ENCODE measurements at regions of chr4 and their contacts with region 1.

Region 1: DNA sequence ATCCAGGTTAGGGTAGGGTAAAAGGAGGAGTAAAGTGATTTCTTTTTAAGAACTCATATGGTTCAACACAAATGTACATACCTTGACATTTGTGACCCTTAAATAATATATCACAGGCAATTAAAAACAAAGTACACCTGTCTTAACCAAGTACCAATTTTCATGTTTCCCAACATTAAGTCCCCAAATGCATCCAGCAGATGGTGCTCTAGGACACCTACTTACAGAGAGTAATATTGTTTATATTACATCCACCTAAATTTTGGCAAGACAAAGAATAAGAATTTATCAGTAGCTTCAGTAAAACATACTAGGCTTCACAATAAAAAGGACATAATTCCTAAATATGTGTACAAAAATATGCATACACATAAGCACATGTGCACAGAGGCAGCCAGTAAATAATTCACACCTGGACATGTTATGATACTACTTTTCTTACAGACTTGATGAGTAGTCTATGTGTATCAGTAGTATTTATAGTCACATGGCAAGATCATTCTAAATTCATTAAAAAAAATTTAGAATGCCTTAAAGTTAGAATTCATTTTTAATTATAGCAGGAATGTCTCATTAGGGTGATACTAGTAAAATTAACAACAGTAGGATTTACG is 219.7 kb downstream of the DCLK2 start:
- DNase-seq: no peak
- H3K4me3 Mint-ChIP-seq: no peak overlapping the region
- H3K27ac Mint-ChIP-seq: no peak overlapping the region
- H3K4me1 Mint-ChIP-seq: peaks cover 13% of the 10 kb centered on the region
- H3K27me3 Mint-ChIP-seq: no peaks in the 10 kb centered on the region

Region 2: DNA sequence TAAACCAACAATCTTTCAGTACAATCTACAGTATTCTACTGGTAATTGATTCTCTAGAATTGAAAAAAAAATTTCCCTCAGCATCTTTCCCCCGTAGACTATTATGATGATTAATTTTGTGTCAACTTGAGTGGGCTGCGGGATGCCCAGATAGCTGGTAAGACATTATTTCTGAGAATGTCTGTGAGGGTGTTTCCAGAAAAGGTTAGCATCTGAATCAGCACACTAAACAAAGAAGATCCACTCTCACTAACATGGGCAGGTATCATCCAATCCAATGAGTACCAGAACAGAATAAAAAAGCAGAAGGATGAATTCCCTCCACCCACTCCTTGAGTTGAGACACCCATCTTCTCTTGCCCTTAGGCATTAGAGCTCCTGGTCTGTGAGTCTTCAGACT is 97.9 kb after region 1 on chr4:
- intact Hi-C with region 1: loop called (anchors 2 kb)
- DNase-seq: no peak
- H3K4me3 Mint-ChIP-seq: no peak overlapping the region
- H3K27ac Mint-ChIP-seq: peak overlapping the region; percentile 84
- H3K4me1 Mint-ChIP-seq: peaks cover 17% of the 10 kb centered on the region
- H3K27me3 Mint-ChIP-seq: no peaks in the 10 kb centered on the region

Region 3: DNA sequence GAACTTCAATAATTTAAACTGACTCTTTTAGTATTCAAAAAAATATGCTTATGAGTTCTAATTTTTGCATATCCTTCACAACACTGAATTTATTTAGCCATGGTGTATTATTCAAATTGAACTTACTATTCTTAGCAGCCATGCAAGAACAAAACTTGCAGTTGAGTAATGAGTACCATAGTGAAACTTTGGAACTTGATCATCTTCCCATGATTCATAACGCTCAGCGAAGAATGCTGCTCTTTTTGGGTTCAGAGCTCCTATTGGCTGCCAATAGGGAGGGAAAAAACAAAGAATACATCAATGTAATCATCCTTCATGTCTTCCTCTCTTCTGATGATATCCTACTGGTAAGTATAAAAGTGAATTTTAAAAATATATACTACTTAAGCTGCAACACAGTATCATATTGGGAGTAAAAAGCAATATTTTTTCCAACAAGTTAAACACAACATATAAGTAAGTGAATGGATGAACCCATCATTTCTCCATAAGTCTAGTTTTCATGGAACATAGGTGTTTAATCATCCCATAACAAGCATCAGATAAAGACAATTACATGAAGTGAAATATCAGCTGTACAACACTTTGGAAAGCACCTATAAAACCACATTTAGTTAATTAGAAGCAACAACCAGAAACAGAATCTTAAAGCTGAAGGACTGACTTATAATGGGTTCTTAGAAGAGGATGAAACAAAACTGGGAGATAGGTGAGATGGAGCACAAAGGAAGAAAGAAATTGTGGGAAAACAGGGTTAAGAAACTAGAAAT is 138.8 kb after region 1 on chr4:
- intact Hi-C with region 1: loop called (anchors 2 kb)
- DNase-seq: no peak
- H3K4me3 Mint-ChIP-seq: no peak overlapping the region
- H3K27ac Mint-ChIP-seq: peak overlapping the region; percentile 29
- H3K4me1 Mint-ChIP-seq: peaks cover 12% of the 10 kb centered on the region
- H3K27me3 Mint-ChIP-seq: no peaks in the 10 kb centered on the region

Region 4: GRCh38 chr4:150493851-150494250 is 195.9 kb after region 1 on chr4:
- intact Hi-C with region 1: loop called (anchors 10 kb)
- DNase-seq: no peak
- H3K4me3 Mint-ChIP-seq: no peak overlapping the region
- H3K27ac Mint-ChIP-seq: no peak overlapping the region
- H3K4me1 Mint-ChIP-seq: peaks cover 8% of the 10 kb centered on the region
- H3K27me3 Mint-ChIP-seq: no peaks in the 10 kb centered on the region

Region 5: GRCh38 chr4:150828159-150828558 is 530.2 kb after region 1 on chr4:
- intact Hi-C with region 1: loop called (anchors 2 kb)
- DNase-seq: peak; percentile 40
- H3K4me3 Mint-ChIP-seq: peak overlapping the region; percentile 10
- H3K27ac Mint-ChIP-seq: peak overlapping the region; percentile 78
- H3K4me1 Mint-ChIP-seq: peaks cover 26% of the 10 kb centered on the region
- H3K27me3 Mint-ChIP-seq: no peaks in the 10 kb centered on the region

Region 6: GRCh38 chr4:150867148-150867547 is 569.2 kb after region 1 on chr4:
- intact Hi-C with region 1: loop called (anchors 1 kb)
- DNase-seq: no peak
- H3K4me3 Mint-ChIP-seq: no peak overlapping the region
- H3K27ac Mint-ChIP-seq: no peak overlapping the region
- H3K4me1 Mint-ChIP-seq: no peaks in the 10 kb centered on the region
- H3K27me3 Mint-ChIP-seq: no peaks in the 10 kb centered on the region

Measured in activated T-helper 2 cell treated with anti-CD3 and anti-CD28 coated beads, Interferon-gamma antibody, Interleukin-2, Interleukin-4, amounts not matched to agents 10 μg/mL and 5 μg/mL and 100 μg/mL, durations not matched to agents 14 hours and 24 hours and 36 hours (primary cell).